Psoas muscle (tissue), 8 donors: ENCODE measurements at regions of chr6 and their contacts with region 1.

Region 1: GRCh38 chr6:31546962-31547726 is at the start of gene NFKBIL1:
- DNase-seq: peak; percentile 95 to 97
- ATAC-seq: peak; percentile 96 to 97 (median 96)
- H3K4me3 ChIP-seq: peak within 1 kb of the TSS; percentile 71
- H3K27ac ChIP-seq: peak within 1 kb of the TSS; percentile 86
- H3K4me1 ChIP-seq: peaks cover 19% of the 10 kb centered on the region
- H3K27me3 ChIP-seq: no peaks in the 10 kb centered on the region
- CTCF ChIP-seq: no peak
- total RNA-seq, gene NFKBIL1: 13.7 to 19.1 (median 15.4) TPM

Region 2: DNA sequence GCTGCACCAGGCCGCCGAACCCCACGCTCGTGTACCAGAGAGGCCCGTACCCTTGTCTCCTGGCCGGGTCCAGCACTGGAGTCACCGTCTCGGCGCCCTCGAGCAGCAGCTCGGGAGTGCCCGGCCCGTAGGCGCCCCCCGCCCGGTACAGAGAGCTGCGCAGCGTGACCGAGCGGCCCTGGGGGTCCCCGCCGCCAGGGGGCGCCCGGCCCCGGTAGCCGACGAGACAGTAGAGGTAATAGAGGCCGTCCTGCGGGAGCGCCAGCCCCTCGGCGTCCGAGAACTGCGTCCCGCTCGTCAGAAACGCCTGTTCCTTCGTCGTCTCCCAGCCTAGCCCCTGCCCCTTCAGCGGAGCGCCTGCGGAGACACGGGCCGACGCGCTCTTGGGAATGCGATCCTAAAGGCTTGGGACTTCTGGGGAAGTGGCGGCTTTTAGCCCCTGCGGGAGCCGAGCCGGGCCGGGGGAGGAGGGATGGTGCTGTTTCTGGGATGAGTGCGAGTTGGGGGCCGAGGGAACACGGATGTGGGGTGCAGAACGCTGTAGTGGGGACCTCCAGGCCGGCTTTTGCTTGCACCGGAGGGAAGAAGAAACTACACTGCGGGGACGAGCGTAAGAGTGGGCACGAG is 33.8 kb after region 1 on chr6:
- intact Hi-C with region 1: loop called (anchors 5 kb)
- DNase-seq: peak; percentile 91 to 95
- ATAC-seq: peak; percentile 98 to 100 (median 99)
- H3K4me3 ChIP-seq: peak overlapping the region; percentile 89
- H3K27ac ChIP-seq: peak overlapping the region; percentile 75
- H3K4me1 ChIP-seq: no peaks in the 10 kb centered on the region
- H3K27me3 ChIP-seq: no peaks in the 10 kb centered on the region
- CTCF ChIP-seq: peak; percentile 97

Region 3: DNA sequence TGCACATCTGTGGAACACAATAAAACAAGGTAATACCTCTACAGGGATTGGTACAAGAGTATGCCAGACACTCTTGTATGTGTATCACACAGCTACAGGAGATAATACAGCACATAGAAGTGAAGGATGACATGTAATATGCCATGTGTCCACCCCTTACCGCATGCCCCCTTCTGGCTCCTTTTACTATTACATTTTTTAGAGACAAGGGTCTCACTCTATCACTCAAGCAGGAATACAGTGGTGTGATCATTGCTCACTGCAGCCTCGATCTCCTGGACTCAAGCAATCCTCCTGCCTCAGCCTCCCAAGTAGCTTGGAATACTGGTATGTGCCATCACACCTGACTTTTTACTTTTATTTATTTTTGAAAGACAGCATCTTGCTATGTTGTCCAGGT is 49.9 kb after region 1 on chr6:
- intact Hi-C with region 1: loop called (anchors 1 to 2 kb)
- DNase-seq: no peak
- ATAC-seq: peak in 2 of 4 donors; percentile 27 to 41
- H3K4me3 ChIP-seq: no peak overlapping the region
- H3K27ac ChIP-seq: no peak overlapping the region
- H3K4me1 ChIP-seq: no peaks in the 10 kb centered on the region
- H3K27me3 ChIP-seq: no peaks in the 10 kb centered on the region
- CTCF ChIP-seq: peak; percentile 23

Region 4: GRCh38 chr6:31619805-31620585 is 72.9 kb after region 1 on chr6:
- intact Hi-C with region 1: loop called in 1 of 2 experiments (anchors 5 kb)
- DNase-seq: peak; percentile 97 to 99
- ATAC-seq: peak; percentile 88 to 94 (median 90)
- H3K4me3 ChIP-seq: peak overlapping the region; percentile 88
- H3K27ac ChIP-seq: peak overlapping the region; percentile 96
- H3K4me1 ChIP-seq: peaks cover 16% of the 10 kb centered on the region
- H3K27me3 ChIP-seq: no peaks in the 10 kb centered on the region
- CTCF ChIP-seq: no peak

Region 5: GRCh38 chr6:31631681-31632278 is 84.6 kb after region 1 on chr6:
- intact Hi-C with region 1: no loop called
- DNase-seq: no peak
- ATAC-seq: peak in 2 of 4 donors; percentile 14 to 18
- H3K4me3 ChIP-seq: no peak overlapping the region
- H3K27ac ChIP-seq: no peak overlapping the region
- H3K4me1 ChIP-seq: no peaks in the 10 kb centered on the region
- H3K27me3 ChIP-seq: no peaks in the 10 kb centered on the region
- CTCF ChIP-seq: no peak

Region 6: DNA sequence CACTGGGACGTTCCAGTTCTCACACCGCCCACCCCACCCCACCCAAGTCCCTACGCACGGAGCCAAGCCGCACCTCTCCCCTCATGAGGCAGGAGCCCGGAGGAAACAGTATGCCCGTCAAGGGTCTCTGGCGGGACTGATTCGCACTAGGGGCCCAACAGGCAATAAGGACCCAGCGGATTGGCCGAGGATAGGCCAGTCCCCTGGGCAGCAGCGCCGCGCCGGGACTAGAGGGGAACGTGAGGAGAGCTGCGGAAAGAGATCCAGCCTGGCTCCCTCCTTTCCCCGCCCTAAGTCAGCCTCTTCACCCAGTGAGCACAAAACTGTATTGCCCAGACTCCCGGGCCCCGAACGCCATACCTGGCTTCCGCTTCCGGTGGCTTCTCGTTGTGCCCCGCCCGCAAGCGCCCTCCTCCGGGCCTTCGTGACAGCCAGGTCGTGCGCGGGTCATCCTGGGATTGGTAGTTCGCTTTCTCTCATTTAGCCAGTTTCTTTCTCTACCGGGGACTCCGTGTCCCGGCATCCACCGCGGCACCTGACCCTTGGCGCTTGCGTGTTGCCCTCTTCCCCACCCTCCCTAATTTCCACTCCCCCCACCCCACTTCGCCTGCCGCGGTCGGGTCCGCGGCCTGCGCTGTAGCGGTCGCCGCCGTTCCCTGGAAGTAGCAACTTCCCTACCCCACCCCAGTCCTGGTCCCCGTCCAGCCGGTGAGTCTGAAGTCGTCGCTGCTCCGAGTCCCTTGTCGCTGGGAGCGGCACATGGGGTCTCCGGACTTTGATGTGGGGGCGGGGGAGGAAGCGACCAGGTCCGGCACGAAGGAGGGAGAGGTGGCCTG is 118.6 kb after region 1 on chr6 and contains the start of gene CSNK2B:
- intact Hi-C with region 1: loop called in 1 of 2 experiments (anchors 5 kb)
- DNase-seq: peak; percentile 99
- ATAC-seq: peak; percentile 89 to 92 (median 91)
- H3K4me3 ChIP-seq: peak within 1 kb of the TSS; percentile 91
- H3K27ac ChIP-seq: peak within 1 kb of the TSS; percentile 97
- H3K4me1 ChIP-seq: peaks cover 41% of the 10 kb centered on the region
- H3K27me3 ChIP-seq: no peaks in the 10 kb centered on the region
- CTCF ChIP-seq: no peak
- total RNA-seq, gene CSNK2B: 102 to 129 (median 103) TPM

Region 7: GRCh38 chr6:31952140-31952805 is 405.1 kb after region 1 on chr6:
- intact Hi-C with region 1: loop called in 1 of 2 experiments (anchors 5 kb)
- DNase-seq: peak; percentile 66 to 79
- ATAC-seq: peak; percentile 68 to 86 (median 72)
- H3K4me3 ChIP-seq: no peak overlapping the region
- H3K27ac ChIP-seq: no peak overlapping the region
- H3K4me1 ChIP-seq: peaks cover 1% of the 10 kb centered on the region
- H3K27me3 ChIP-seq: no peaks in the 10 kb centered on the region
- CTCF ChIP-seq: peak; percentile 72